H1 (cell line): ENCODE measurements at regions of chr12 and their contacts with region 1.

Region 1: DNA sequence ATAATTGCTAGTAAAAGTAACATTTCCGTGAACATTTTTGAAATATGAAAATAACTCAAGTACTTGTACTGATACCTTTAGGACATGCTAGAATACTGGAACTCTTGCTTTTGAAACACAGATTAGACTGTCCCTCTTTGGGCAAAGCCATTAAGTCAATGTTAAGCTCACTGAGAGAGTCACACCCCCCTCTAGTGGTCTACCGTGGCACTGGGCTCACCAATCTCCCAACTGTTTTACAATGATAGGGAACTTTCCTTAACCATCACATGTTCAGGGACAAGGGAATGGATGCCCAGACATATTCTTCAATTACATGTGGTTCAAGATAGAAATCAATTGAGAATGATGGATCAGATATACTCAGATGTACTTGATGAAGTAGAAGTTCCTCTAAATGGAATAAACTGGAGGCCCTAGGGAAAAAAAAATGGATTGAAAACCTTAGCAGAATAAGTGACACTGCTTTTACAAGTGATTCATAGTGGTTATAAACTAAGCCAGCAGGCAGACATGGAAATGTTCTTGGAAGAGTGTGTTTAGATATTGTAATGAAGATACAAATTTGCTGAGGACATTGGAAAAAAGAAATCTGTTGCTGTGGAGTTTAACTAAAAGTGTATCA is 17.8 kb downstream of the NANOG start:
- DNase-seq: peak; percentile 75 to 95
- H3K4me3 ChIP-seq: no peak overlapping the region
- H3K27ac ChIP-seq: no peak overlapping the region
- H3K4me1 ChIP-seq: no peaks in the 10 kb centered on the region
- H3K27me3 ChIP-seq: no peaks in the 10 kb centered on the region
- CTCF ChIP-seq: peak; percentile 72 to 99 (median 95)
- EP300 ChIP-seq: no peak
- POLR2A ChIP-seq: no peak
- RAD21 ChIP-seq: peak; percentile 99 to 100

Region 2: DNA sequence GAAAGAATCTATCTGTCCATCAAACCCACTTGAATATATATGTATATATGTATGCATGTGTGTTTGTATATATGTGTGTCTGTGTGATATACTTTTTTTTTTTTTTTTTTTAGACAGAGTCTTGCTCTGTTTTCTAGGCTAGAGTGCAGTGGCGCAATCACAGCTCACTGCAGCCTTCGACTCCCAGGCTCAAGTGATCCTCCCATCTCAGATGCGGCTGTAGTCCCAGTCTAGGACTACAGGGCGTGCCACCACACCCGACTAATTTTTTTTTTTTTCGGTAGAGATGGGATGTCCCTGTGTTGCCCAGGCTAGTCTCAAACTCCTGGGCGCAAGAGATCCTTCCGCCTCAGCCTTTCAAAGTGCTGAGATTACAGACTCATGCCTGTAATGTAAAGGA is 128.2 kb before region 1 on chr12:
- CTCF ChIA-PET with region 1: interaction called, 128 read pairs
- POLR2A ChIA-PET with region 1: interaction called, 4 read pairs
- DNase-seq: no peak
- H3K4me3 ChIP-seq: no peak overlapping the region
- H3K27ac ChIP-seq: no peak overlapping the region
- H3K4me1 ChIP-seq: 0 out of 7 replicates have a peak, but pooled peaks cover 0 to 2% (median 0%) of the 10 kb centered on the region in 4 experiments
- H3K27me3 ChIP-seq: no peaks in the 10 kb centered on the region
- CTCF ChIP-seq: no peak
- EP300 ChIP-seq: no peak
- POLR2A ChIP-seq: no peak
- RAD21 ChIP-seq: no peak

Region 3: DNA sequence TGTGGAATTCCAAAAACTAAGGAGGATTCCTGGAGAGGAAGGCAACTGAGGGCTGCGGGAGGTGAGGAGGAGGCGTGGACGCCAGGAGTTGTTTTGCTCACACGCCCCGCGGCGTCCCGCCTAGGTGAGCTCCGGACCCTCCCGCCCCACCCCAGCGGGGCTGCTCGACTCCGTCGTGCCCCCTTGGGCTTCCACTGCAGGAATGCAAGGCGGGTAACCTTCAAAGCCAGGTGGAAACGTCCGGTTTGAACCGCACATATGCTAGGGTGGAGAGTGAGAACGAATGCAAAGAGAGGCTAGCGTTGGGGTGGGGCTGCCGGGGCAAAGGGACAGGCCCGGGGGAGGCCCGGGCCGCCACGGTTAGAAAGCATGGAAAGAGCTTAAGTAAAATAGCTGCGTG is 101.1 kb before region 1 on chr12:
- CTCF ChIA-PET with region 1: interaction called, 17 read pairs
- POLR2A ChIA-PET with region 1: no interaction called
- DNase-seq: no peak
- H3K4me3 ChIP-seq: no peak overlapping the region
- H3K27ac ChIP-seq: no peak overlapping the region
- H3K4me1 ChIP-seq: peaks cover 0 to 6% (median 1%) of the 10 kb centered on the region in 4 experiments; a peak in 3 of 7 replicates
- H3K27me3 ChIP-seq: no peaks in the 10 kb centered on the region
- CTCF ChIP-seq: no peak
- EP300 ChIP-seq: no peak
- POLR2A ChIP-seq: no peak
- RAD21 ChIP-seq: no peak

Region 4: GRCh38 chr12:7716381-7716780 is 90.6 kb before region 1 on chr12:
- CTCF ChIA-PET with region 1: interaction called, 69 read pairs
- POLR2A ChIA-PET with region 1: interaction called, 7 read pairs
- DNase-seq: no peak
- H3K4me3 ChIP-seq: no peak overlapping the region
- H3K27ac ChIP-seq: no peak overlapping the region
- H3K4me1 ChIP-seq: peaks cover 0 to 5% (median 2%) of the 10 kb centered on the region in 4 experiments; a peak in 4 of 7 replicates
- H3K27me3 ChIP-seq: no peaks in the 10 kb centered on the region
- CTCF ChIP-seq: peak in 2 of 3 experiments; percentile 44 to 59; a peak in 3 of 4 replicates
- EP300 ChIP-seq: no peak
- POLR2A ChIP-seq: no peak
- RAD21 ChIP-seq: peak; percentile 76 to 82

Region 5: DNA sequence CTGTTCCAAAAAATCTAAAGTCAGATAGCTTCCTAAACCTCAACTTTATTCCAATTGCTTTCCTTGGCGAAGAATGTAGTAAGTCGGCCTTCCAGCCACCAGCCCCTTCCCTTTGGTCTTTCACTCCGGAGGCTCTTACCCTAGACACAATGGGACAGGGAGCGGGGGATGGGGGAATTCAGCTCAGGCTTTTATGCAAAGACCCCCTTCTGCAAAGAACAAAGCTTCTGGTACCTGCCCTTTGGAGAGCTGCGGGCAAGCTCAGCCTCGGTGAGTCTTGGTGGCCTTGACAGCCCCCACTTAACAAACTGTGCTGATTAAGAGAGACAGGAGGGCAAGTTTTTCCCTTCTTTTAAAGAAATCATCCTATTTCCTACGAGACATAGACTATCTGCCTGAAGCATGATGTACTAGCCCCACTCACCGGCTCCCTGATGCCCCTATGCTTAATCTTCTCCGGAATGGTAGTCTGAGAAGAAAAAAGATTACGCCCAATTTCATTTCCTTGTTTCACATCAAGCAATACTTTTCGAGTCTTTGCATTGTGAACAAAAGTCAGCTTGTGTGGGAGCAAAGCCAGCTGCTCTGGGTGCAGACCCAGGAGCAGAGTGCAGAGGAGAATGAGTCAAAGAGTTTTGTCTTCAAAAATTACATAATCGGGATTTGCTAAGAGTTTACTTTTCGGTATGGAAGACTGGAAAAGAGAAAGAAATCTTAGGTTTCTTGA is 19.2 kb before region 1 on chr12:
- CTCF ChIA-PET with region 1: interaction called, 9 read pairs
- POLR2A ChIA-PET with region 1: interaction called, 22 read pairs
- DNase-seq: peak; percentile 61 to 68
- H3K4me3 ChIP-seq: peak overlapping the region; percentile 13 to 72 (median 22); a peak in 5 of 8 replicates
- H3K27ac ChIP-seq: peak overlapping the region; percentile 43
- H3K4me1 ChIP-seq: peaks cover 8 to 21% (median 14%) of the 10 kb centered on the region in 4 experiments
- H3K27me3 ChIP-seq: no peaks in the 10 kb centered on the region
- CTCF ChIP-seq: no peak
- EP300 ChIP-seq: no peak
- POLR2A ChIP-seq: no peak
- RAD21 ChIP-seq: peak in 1 of 2 experiments; percentile 16; a peak in 2 of 4 replicates

Region 6: GRCh38 chr12:7899755-7900154 is 92.8 kb after region 1 on chr12:
- CTCF ChIA-PET with region 1: no interaction called
- POLR2A ChIA-PET with region 1: no interaction called
- DNase-seq: no peak
- H3K4me3 ChIP-seq: no peak overlapping the region
- H3K27ac ChIP-seq: no peak overlapping the region
- H3K4me1 ChIP-seq: no peaks in the 10 kb centered on the region; a peak in 1 of 7 replicates
- H3K27me3 ChIP-seq: no peaks in the 10 kb centered on the region
- CTCF ChIP-seq: no peak
- EP300 ChIP-seq: no peak
- POLR2A ChIP-seq: no peak
- RAD21 ChIP-seq: no peak